Activated T-helper 1 cell treated with anti-CD3 and anti-CD28 coated beads, Interleukin-12 subunit alpha, Interleukin-12 subunit beta, Interleukin-2, Interleukin-4 antibody, amounts not matched to agents 30 ng/mL and 10 ng/mL and 1 ng/mL, durations not matched to agents 14 hours and 24 hours and 36 hours (primary cell): ENCODE measurements at regions of chr2 and their contacts with region 1.

Region 1: GRCh38 chr2:144237830-144238627 is 281.9 kb downstream of the ZEB2 start:
- DNase-seq: no peak
- H3K4me3 Mint-ChIP-seq: no peak overlapping the region
- H3K27ac Mint-ChIP-seq: peak overlapping the region; percentile 1
- H3K4me1 Mint-ChIP-seq: peaks cover 82% of the 10 kb centered on the region
- H3K27me3 Mint-ChIP-seq: no peaks in the 10 kb centered on the region

Region 2: GRCh38 chr2:144015655-144016245 is 222.3 kb before region 1 on chr2:
- intact Hi-C with region 1: no loop called
- DNase-seq: no peak
- H3K4me3 Mint-ChIP-seq: no peak overlapping the region
- H3K27ac Mint-ChIP-seq: no peak overlapping the region
- H3K4me1 Mint-ChIP-seq: no peaks in the 10 kb centered on the region
- H3K27me3 Mint-ChIP-seq: no peaks in the 10 kb centered on the region

Region 3: GRCh38 chr2:144267239-144267638 is 29.2 kb after region 1 on chr2:
- intact Hi-C with region 1: no loop called
- DNase-seq: no peak
- H3K4me3 Mint-ChIP-seq: no peak overlapping the region
- H3K27ac Mint-ChIP-seq: peak overlapping the region; percentile 43
- H3K4me1 Mint-ChIP-seq: peaks cover 26% of the 10 kb centered on the region
- H3K27me3 Mint-ChIP-seq: no peaks in the 10 kb centered on the region

Region 4: DNA sequence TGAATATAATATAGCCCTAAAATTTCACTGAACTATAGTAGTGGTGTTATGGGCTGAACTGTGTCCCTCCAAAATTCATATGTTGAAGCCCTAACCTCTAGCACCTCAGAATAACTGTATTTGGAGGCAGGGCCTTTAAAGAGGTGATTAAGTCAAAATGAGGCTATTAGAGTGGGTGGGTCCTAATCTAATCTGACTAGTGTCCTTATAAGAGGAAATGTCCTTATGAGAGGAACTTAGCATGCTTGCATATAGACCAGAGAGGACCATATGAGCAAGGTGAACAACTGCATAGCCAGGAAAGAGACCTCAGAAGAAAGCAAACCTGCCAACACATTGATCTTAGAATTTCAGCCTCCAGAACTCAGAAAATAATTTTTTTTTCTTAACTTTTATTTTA is 43.4 kb after region 1 on chr2:
- intact Hi-C with region 1: loop called (anchors 5 kb)
- DNase-seq: no peak
- H3K4me3 Mint-ChIP-seq: no peak overlapping the region
- H3K27ac Mint-ChIP-seq: no peak overlapping the region
- H3K4me1 Mint-ChIP-seq: peaks cover 15% of the 10 kb centered on the region
- H3K27me3 Mint-ChIP-seq: no peaks in the 10 kb centered on the region

Region 5: GRCh38 chr2:144320491-144320890 is 82.5 kb after region 1 on chr2:
- intact Hi-C with region 1: no loop called
- DNase-seq: no peak
- H3K4me3 Mint-ChIP-seq: no peak overlapping the region
- H3K27ac Mint-ChIP-seq: peak overlapping the region; percentile 43
- H3K4me1 Mint-ChIP-seq: peaks cover 50% of the 10 kb centered on the region
- H3K27me3 Mint-ChIP-seq: no peaks in the 10 kb centered on the region

Region 6: GRCh38 chr2:144493027-144493809 is 255.2 kb after region 1 on chr2:
- intact Hi-C with region 1: no loop called
- DNase-seq: no peak
- H3K4me3 Mint-ChIP-seq: no peak overlapping the region
- H3K27ac Mint-ChIP-seq: no peak overlapping the region
- H3K4me1 Mint-ChIP-seq: peaks cover 23% of the 10 kb centered on the region
- H3K27me3 Mint-ChIP-seq: peaks cover 2% of the 10 kb centered on the region